A549 (cell line): ENCODE measurements at regions of chr1 and their contacts with region 1.

Region 1: DNA sequence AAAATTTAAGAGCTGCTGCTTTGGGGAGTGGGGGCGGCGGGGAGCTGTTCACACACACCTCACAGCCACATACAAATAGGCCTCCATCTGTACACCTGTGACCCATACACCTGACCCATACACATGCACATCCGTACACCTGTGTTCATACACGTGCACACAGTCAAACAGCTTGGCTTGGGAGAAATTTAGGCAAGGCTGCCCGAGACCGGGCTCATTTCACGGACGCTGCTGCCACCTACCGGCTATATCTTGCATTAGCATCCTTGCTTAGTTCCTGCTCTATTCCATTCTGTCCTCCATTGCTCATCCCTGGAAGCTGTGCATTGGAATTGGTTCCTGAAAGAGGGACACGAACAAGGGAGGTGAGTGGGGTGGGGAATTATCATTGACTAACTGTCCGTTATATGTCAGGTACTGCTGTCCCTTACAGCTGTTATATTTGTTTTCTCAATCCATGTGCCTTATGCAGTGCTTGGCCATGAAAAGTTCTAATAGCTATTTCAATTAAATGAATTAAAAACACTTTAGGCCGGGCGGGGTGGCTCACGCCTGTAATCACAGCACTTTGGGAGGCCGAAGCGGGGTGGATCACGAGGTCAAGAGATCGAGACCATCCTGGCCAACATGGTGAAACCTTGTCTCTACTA is 37.1 kb upstream of the EPB41 start:
- DNase-seq: peak; percentile 66 to 73
- ATAC-seq: peak; percentile 80 to 86
- H3K4me3 ChIP-seq: no peak overlapping the region
- H3K27ac ChIP-seq: no peak overlapping the region
- H3K4me1 ChIP-seq: peaks cover 6% of the 10 kb centered on the region; the same call in 2 of the 3 replicates
- CTCF ChIP-seq: peak; percentile 73
- EP300 ChIP-seq: no peak
- POLR2A ChIP-seq: no peak
- RAD21 ChIP-seq: peak; percentile 92 to 97

Region 2: GRCh38 chr1:28648474-28649198 is 228.6 kb before region 1 on chr1 and contains the start of gene RNU11:
- CTCF ChIA-PET with region 1: interaction called, 6 read pairs
- POLR2A ChIA-PET with region 1: interaction called, 16 read pairs
- DNase-seq: peak; percentile 77 to 97
- ATAC-seq: peak; percentile 88 to 93
- H3K4me3 ChIP-seq: peak within 1 kb of the TSS; percentile 40
- H3K27ac ChIP-seq: peak within 1 kb of the TSS; percentile 96 to 97
- H3K4me1 ChIP-seq: peaks cover 15% of the 10 kb centered on the region; the same call in 2 of the 3 replicates
- CTCF ChIP-seq: no peak
- EP300 ChIP-seq: 0 out of 5 replicates have a peak, but pooled peaks of 1 of the 2 experiments have one; percentile 29
- POLR2A ChIP-seq: peak; percentile 99
- RAD21 ChIP-seq: no peak
- polyA plus RNA-seq, gene RNU11: not detected in 2 replicates

Region 3: GRCh38 chr1:28745653-28746173 is 131.5 kb before region 1 on chr1:
- CTCF ChIA-PET with region 1: no interaction called
- POLR2A ChIA-PET with region 1: no interaction called
- DNase-seq: no peak
- ATAC-seq: no peak
- H3K4me3 ChIP-seq: no peak overlapping the region
- H3K27ac ChIP-seq: no peak overlapping the region
- H3K4me1 ChIP-seq: peaks cover 20% of the 10 kb centered on the region
- CTCF ChIP-seq: no peak
- EP300 ChIP-seq: no peak
- POLR2A ChIP-seq: no peak
- RAD21 ChIP-seq: no peak

Region 4: DNA sequence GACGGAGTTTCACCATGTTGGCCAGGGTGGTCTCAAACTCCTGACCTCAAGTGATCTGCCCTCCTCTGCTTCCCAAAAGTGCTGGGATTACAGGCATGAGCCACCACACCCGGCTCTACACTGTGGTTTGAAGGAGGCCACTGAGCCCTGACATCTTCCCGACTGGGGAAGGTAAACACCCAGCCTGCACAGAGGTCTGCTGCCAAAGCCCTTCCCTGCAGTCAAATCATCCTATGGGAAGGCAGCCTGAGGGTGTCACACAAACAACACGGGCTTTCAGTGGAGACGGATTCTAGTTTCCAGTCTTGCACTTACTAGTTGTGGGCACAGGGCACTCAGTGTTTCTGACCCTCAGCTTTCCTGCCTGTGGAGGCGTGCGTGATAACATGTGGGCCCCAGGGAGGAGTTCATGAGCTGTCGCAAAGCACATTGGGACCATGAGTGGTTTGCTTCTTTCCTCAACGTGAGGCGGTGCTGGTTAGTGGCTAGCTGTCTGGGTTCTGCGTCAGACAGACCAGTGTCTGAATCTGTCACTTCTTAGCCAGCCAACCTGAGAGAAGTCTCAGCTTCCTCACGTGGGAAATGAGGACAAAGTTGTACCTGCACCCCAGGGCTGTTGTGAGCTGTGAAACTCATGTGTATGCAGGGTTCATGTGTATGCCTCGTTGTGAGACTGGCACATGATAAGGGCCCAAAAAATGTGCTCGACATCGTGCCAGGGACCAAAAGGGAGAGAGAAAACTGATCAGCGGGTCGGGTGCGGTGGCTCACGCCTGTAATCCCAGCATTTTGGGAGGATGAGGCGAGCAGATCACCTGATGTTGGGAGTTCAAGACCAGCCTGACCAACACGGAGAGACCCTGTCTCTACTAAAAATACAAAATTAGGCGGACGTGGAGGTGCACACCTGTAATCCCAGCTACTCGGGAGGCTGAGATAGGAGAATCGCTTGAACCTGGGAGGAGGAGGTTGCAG is 86.6 kb before region 1 on chr1:
- CTCF ChIA-PET with region 1: interaction called, 211 read pairs
- POLR2A ChIA-PET with region 1: no interaction called
- DNase-seq: no peak
- ATAC-seq: no peak
- H3K4me3 ChIP-seq: no peak overlapping the region
- H3K27ac ChIP-seq: no peak overlapping the region
- H3K4me1 ChIP-seq: no peaks in the 10 kb centered on the region
- CTCF ChIP-seq: no peak
- EP300 ChIP-seq: no peak
- POLR2A ChIP-seq: no peak
- RAD21 ChIP-seq: no peak

Region 5: GRCh38 chr1:28860332-28861073 is 16.8 kb before region 1 on chr1:
- CTCF ChIA-PET with region 1: interaction called, 20 read pairs
- POLR2A ChIA-PET with region 1: no interaction called
- DNase-seq: peak; percentile 30 to 58
- ATAC-seq: peak; percentile 46 to 58; a peak in 4 of 6 replicates
- H3K4me3 ChIP-seq: no peak overlapping the region
- H3K27ac ChIP-seq: peak overlapping the region in 1 of 2 experiments; percentile 32; a peak in 2 of 6 replicates
- H3K4me1 ChIP-seq: peaks cover 18% of the 10 kb centered on the region
- CTCF ChIP-seq: no peak
- EP300 ChIP-seq: no peak
- POLR2A ChIP-seq: no peak
- RAD21 ChIP-seq: no peak

Region 6: DNA sequence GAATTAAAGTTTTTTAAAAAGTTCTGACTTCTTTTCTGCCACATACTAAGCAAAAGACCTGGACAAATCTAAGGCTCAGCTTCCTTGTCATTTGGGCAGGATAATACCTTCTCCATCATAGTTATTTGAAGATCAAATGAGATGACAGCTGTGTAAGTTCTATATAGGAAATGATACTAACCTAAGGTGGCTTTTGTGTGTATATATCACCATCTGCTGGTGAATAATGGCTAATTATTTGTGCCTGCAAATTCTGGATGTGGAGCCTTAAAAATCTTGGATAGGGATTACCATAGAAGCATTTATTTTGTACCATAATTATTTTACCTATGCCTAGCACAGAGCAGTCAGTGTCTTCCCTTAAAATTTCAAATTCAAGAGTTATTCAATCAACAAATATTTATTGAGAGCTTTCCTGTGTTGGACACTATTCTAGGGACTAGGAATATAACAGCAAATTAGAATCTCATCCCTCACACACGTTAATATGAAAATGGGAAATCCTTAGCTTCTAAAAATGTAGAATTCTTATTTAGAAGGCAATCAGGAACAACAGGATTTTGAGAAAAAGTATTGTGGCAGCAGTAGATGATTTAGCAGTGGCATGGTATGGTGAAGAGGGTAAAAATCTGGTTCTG is 156.7 kb after region 1 on chr1:
- CTCF ChIA-PET with region 1: interaction called, 512 read pairs
- POLR2A ChIA-PET with region 1: interaction called, 5 read pairs
- DNase-seq: peak; percentile 38 to 46
- ATAC-seq: peak in 1 of 2 experiments; percentile 58; a peak in 2 of 6 replicates
- H3K4me3 ChIP-seq: no peak overlapping the region
- H3K27ac ChIP-seq: no peak overlapping the region
- H3K4me1 ChIP-seq: no peaks in the 10 kb centered on the region
- CTCF ChIP-seq: peak; percentile 80
- EP300 ChIP-seq: no peak
- POLR2A ChIP-seq: no peak
- RAD21 ChIP-seq: peak; percentile 93 to 94